ENCODE measurements at regions of chr6 and their contacts with region 1.

Region 1: DNA sequence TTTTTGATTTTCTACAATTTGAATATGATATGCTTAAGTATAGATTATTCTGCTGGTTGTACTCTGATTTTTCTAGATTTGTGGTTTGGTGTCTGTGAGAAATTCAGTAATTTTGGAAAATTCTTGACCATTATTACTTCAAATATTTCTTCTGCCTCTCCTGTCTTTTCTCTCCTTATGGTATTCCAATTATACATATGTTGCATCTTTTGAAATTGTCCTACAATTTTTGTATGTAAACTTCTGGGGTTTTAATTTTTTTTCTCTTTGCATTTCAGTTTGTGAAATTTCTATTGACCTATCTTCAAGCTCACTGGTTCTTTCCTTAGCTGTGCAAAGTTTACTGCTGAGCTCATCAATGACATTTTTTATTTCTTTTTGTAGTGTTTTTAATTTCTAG is 534.4 kb upstream of the SLC35B3 start:
- DNase-seq: no peak
- H3K4me3 ChIP-seq: no peak overlapping the region
- H3K27ac ChIP-seq: no peak overlapping the region
- H3K4me1 ChIP-seq: peaks cover 16% of the 10 kb centered on the region
- H3K27me3 ChIP-seq: no peaks in the 10 kb centered on the region
- CTCF ChIP-seq: no peak

Region 2: DNA sequence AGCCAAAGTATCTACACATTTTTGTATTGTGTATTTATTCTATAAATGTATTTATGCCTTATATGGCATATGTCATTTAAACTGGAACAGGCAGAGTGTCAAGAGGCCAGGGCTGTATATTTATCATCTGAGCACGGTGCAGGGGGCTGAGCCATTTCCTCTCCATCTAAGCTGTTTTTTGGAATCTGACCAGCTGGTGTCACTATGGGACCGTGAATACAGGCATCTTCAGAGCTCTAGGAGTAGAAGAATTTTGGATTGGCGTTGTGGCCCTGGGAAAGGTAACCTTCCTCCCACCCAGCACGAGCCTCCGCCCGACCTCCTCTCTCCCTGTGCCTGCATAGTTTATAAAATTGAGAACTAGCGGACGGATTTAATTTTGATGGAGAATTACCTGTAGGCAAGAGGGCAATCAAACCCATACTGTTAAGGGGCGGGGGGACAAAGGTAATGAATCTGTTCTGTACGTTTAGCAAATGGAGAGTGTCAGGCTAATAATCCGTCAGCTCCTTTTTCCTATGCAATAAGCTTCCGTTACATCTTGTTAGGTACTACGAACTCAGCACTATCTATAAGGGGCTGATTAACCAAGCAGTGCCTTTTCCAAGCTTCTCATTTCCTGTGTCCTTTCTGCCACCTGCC is 838.4 kb before region 1 on chr6:
- CTCF ChIA-PET with region 1: no interaction called
- POLR2A ChIA-PET with region 1: no interaction called
- intact Hi-C with region 1: loop called (anchors 10 kb)
- DNase-seq: peak; percentile 89
- H3K4me3 ChIP-seq: no peak overlapping the region
- H3K27ac ChIP-seq: peak overlapping the region; percentile 22
- H3K4me1 ChIP-seq: peaks cover 25% of the 10 kb centered on the region
- H3K27me3 ChIP-seq: no peaks in the 10 kb centered on the region
- CTCF ChIP-seq: peak; percentile 81

Region 3: DNA sequence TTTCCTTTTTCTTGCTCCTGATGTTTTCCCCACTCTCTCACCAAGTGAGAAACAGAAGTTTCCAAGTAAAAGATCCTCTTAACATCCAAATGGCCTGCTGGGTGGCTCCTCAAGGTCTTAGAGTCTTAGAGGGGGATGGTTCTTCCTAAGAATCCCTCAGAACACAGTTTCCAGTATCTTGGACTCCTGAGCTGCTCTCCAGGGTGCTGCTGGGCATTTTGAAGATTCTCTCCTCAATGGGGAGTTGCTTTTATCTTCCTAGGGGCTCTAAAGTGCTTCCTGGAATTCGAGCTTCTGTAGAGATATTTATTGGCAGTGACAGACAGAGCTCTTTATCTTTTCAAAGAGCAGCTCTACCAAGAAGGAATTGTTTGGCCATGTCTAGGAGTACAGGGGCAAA is 463.6 kb before region 1 on chr6:
- CTCF ChIA-PET with region 1: no interaction called
- POLR2A ChIA-PET with region 1: no interaction called
- intact Hi-C with region 1: loop called (anchors 10 kb)
- DNase-seq: peak; percentile 71
- H3K4me3 ChIP-seq: no peak overlapping the region
- H3K27ac ChIP-seq: no peak overlapping the region
- H3K4me1 ChIP-seq: peaks cover 20% of the 10 kb centered on the region
- H3K27me3 ChIP-seq: no peaks in the 10 kb centered on the region
- CTCF ChIP-seq: no peak